ENCODE measurements at regions of chr18 and their contacts with region 1.

Region 1: GRCh38 chr18:47528343-47528742 is 276.9 kb upstream of the SKOR2 start:
- DNase-seq: no peak
- H3K4me3 ChIP-seq: no peak overlapping the region
- H3K27ac ChIP-seq: no peak overlapping the region
- H3K4me1 ChIP-seq: no peaks in the 10 kb centered on the region
- CTCF ChIP-seq: no peak

Region 2: DNA sequence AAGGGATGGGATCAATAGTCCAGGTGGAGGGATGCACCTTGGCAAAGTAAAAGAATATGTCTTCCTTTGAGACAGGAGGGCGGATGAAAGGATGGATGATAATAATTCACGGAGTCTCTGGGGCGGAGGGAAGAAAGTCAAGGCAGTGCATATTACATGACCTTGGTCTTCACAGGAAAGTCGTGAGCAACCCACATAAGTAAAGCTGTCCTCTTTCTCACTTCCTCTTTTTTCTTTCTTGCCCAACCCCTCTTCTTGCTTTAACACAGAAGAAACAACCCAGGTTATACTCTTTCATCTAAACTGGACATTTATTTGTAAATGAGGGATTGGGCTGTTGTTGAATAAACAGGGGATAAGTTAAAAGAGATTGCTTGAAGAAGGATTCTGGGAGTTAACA is 108.2 kb before region 1 on chr18:
- CTCF ChIA-PET with region 1: no interaction called
- POLR2A ChIA-PET with region 1: no interaction called
- intact Hi-C with region 1: no loop called
- DNase-seq: peak; percentile 70
- H3K4me3 ChIP-seq: peak overlapping the region; percentile 42
- H3K27ac ChIP-seq: peak overlapping the region; percentile 37
- H3K4me1 ChIP-seq: peaks cover 33% of the 10 kb centered on the region
- CTCF ChIP-seq: no peak

Region 3: GRCh38 chr18:47582093-47582492 is 53.8 kb after region 1 on chr18:
- CTCF ChIA-PET with region 1: no interaction called
- POLR2A ChIA-PET with region 1: no interaction called
- intact Hi-C with region 1: loop called (anchors 10 kb)
- DNase-seq: no peak
- H3K4me3 ChIP-seq: no peak overlapping the region
- H3K27ac ChIP-seq: no peak overlapping the region
- H3K4me1 ChIP-seq: no peaks in the 10 kb centered on the region
- CTCF ChIP-seq: no peak

Measured in OCI-LY7 (cell line).